ENCODE measurements at regions of chr2 and their contacts with region 1.

Region 1: DNA sequence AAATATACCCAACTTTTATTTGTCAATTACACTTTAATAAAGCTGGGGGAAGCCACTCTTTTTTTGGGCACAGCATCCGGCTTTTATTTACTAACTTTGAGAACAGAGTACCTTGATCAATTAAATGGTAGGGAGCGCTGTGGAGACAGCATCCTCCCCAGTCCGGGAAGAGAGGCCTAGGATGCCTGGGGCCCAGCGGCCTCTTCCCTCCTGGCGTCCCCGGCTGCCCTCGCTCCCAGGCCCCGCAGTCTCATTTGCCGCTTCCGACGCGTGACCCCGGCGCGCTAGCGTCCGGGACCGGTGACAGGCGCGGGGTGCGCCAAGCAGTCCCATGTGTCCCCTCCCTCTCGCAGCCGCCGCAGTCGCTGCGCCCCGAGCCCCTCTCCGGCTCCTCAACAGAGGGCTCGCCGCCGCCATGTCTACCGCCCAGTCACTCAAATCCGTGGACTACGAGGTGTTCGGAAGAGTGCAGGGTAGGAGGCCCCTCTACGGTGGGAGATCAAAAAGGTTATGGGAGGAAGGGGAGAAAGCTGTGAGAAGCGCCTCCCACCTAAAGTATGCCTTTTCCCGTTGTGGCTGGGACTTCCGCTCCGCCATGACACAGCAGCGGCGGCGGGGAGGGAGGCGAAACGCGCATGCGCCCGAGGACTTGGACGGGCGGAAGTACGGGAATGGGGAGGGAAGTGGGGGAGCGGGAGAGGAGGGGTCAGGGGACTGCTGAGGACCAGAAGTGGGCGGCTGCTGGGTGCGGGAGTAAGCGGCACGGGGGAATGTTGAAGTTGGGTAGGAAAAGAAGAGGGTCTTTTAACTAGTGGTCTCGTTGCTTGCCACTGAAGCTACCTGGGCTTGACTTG is at the start of gene ACYP2:
- DNase-seq: peak; percentile 95
- H3K4me3 Mint-ChIP-seq: peak within 1 kb of the TSS; percentile 94
- H3K27ac Mint-ChIP-seq: peak within 1 kb of the TSS; percentile 99
- H3K4me1 Mint-ChIP-seq: peaks cover 13% of the 10 kb centered on the region
- H3K27me3 Mint-ChIP-seq: no peaks in the 10 kb centered on the region
- total RNA-seq, gene ACYP2: 5.6 to 6.4 TPM

Region 2: DNA sequence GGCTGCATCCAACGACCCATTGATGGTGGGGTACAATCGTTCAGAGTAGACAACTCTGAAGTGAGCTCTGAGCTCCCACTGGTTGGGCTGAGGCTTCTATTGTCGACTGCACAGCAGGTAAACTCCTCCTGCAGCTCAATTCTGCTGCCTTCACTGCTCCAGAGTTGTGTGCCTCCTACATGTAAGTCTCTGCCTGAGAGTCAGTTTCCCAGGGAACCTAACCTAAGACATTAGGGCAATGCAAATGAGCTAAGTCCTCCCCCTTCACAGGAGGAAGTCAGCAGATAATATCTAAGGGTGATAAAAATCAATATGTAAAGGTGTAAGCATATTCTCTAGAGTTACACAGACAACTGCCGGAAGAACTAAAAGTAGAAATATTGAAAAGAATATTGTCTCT is 22.6 kb before region 1 on chr2:
- CTCF ChIA-PET with region 1: no interaction called
- POLR2A ChIA-PET with region 1: no interaction called
- intact Hi-C with region 1: no loop called
- DNase-seq: no peak
- H3K4me3 Mint-ChIP-seq: no peak overlapping the region
- H3K27ac Mint-ChIP-seq: peak overlapping the region; percentile 55
- H3K4me1 Mint-ChIP-seq: peaks cover 23% of the 10 kb centered on the region
- H3K27me3 Mint-ChIP-seq: no peaks in the 10 kb centered on the region

Region 3: GRCh38 chr2:54206596-54206995 is 91.1 kb after region 1 on chr2:
- CTCF ChIA-PET with region 1: no interaction called
- POLR2A ChIA-PET with region 1: no interaction called
- intact Hi-C with region 1: no loop called
- DNase-seq: no peak
- H3K4me3 Mint-ChIP-seq: no peak overlapping the region
- H3K27ac Mint-ChIP-seq: no peak overlapping the region
- H3K4me1 Mint-ChIP-seq: no peaks in the 10 kb centered on the region
- H3K27me3 Mint-ChIP-seq: no peaks in the 10 kb centered on the region

Region 4: DNA sequence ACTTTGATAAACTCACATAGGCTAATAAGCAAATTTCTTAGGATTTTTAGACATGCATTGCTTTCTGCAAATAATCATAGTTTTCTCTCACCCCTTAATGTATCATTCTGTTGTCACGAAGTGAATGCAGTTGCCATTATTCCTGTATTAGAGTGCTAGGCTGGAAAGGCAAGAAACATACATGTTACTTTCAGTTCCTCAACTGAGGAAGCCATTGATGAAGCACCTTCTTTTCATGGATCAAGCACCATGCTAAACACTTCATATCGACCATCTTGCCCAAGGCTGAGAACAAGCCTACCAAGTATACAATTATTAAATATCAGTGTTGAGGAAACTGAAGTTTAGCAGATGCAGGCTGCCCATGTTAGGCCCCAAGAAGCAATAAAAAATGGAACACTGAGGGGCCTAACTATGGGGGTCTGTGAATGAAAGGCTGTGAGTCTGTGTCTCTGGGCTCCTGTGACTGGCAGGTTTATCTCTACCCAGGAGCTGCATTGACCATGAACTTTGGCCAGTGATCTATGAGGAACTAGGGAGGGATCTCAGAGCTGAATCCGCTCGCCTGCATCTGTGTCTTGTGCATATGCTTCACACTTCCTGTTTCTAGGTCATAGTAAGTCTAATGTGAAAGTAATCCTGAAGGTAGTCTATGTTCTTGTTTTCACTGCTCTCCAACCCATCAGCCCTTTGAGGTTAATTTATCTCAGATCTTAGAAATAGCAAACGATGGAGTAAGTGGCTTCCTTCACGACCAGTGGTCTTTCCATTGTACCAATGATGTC is 156.5 kb after region 1 on chr2:
- CTCF ChIA-PET with region 1: no interaction called
- POLR2A ChIA-PET with region 1: no interaction called
- intact Hi-C with region 1: no loop called
- DNase-seq: no peak
- H3K4me3 Mint-ChIP-seq: no peak overlapping the region
- H3K27ac Mint-ChIP-seq: no peak overlapping the region
- H3K4me1 Mint-ChIP-seq: peaks cover 7% of the 10 kb centered on the region
- H3K27me3 Mint-ChIP-seq: no peaks in the 10 kb centered on the region

Region 5: DNA sequence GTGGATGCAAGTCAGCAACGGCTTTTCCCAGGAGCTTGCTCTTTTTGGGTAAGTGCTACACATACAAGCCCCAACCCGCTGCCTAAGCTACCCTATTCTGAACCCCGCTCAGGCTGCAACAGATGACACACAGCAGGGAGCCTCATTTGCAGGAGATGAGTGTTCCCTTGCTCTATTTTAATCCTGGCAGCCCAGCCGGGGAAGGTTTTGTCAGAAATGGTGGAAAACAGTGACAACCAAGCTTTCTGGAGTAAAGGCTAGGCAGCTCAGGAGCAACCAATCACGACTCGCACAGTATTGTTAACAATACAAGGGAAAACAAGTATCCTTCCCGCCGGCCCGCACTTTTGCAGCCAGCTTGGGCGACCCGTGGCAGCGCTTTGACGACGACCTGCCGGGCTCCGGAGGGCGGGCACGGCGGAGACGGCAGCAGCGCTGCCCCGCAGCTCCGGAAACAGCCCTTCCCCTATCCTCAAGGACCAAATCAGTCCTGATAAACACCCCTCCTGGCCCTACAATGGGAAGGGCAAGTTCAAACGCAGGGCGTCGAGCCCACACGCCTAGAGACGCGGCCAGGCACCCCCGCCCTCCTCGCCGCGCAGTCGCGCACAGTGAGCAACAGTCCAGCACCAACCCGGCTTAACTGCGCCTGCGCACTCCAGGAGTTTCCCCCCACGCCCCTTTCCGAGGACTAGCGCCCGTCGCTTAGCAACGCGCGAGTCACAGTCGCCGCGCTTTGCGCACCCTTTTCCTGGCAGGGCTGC is 214.8 kb after region 1 on chr2:
- CTCF ChIA-PET with region 1: no interaction called
- POLR2A ChIA-PET with region 1: interaction called, 3 read pairs
- intact Hi-C with region 1: loop called (anchors 2 kb)
- DNase-seq: peak; percentile 92
- H3K4me3 Mint-ChIP-seq: peak overlapping the region; percentile 75
- H3K27ac Mint-ChIP-seq: peak overlapping the region; percentile 14
- H3K4me1 Mint-ChIP-seq: peaks cover 12% of the 10 kb centered on the region
- H3K27me3 Mint-ChIP-seq: peaks cover 2% of the 10 kb centered on the region